Sigmoid colon (tissue), 7 donors: ENCODE measurements at regions of chr17 and their contacts with region 1.

Region 1: GRCh38 chr17:21284319-21285163 is at the start of gene MAP2K3:
- DNase-seq: peak; percentile 100
- H3K4me3 ChIP-seq: peak within 1 kb of the TSS; percentile 77 to 97 (median 86)
- H3K27ac ChIP-seq: peak within 1 kb of the TSS; percentile 91 to 99 (median 98)
- H3K4me1 ChIP-seq: peaks cover 0 to 71% (median 67%) of the 10 kb centered on the region in 4 donors
- H3K27me3 ChIP-seq: no peaks in the 10 kb centered on the region
- CTCF ChIP-seq: no peak
- EP300 ChIP-seq: no peak
- POLR2A ChIP-seq: peak; percentile 31 to 33
- total RNA-seq, gene MAP2K3: 9.5 to 23.3 (median 13.3) TPM

Region 2: DNA sequence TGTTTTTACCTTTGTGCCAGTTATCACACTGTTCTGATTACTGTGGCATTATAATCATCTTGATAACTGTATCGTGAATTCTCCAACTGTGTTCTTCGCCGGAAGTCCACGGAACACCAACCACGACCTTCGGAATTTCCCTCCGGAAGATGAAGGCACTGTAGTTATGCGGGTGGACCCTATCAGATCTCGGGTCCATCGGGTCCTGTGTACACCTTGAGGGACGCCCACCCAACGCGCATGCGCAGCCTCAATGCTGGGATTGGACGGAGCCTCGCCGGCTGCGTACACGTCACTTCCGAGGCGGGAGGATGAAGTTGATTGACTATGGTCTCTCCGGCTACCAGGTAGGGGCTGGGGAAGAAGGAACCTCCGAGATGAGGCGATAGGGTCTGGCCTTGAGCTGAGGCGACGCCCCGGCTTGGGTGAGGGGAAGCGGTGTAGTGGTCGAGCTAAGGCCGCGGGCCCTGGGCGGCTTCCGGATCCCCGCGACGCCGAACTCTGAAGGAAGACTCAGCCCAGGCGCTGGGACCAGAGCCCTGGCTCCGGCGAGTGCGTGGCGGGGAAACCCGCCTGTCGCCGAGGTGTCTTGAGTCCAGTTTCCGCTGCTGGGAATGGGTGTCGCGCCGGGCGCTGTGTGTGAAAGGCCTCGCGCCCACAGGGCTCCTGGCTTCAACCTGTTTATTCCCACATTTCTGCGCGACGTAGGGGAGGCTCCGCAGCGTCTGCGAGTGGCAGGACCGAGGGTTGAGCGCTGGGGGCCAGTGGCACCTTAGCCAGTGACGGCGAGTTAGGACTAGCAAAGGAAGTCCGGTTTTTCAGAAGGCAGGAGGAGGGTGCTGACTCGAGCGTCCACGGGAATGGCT is 157.7 kb before region 1 on chr17 and contains the start of gene DHRS7B:
- intact Hi-C with region 1: loop called (anchors 5 kb)
- DNase-seq: peak; percentile 98
- H3K4me3 ChIP-seq: peak within 1 kb of the TSS; percentile 66 to 85 (median 76)
- H3K27ac ChIP-seq: peak within 1 kb of the TSS; percentile 91 to 95 (median 94)
- H3K4me1 ChIP-seq: peaks cover 0 to 27% (median 17%) of the 10 kb centered on the region in 4 donors
- H3K27me3 ChIP-seq: no peaks in the 10 kb centered on the region
- CTCF ChIP-seq: no peak
- EP300 ChIP-seq: no peak
- POLR2A ChIP-seq: peak; percentile 31 to 53
- total RNA-seq, gene DHRS7B: 19.7 to 31.9 (median 27.0) TPM

Region 3: GRCh38 chr17:21214015-21214776 is 70.3 kb before region 1 on chr17 and contains the start of gene TMEM11:
- intact Hi-C with region 1: loop called (anchors 2 kb)
- DNase-seq: peak; percentile 98
- H3K4me3 ChIP-seq: peak within 1 kb of the TSS; percentile 85 to 95 (median 91)
- H3K27ac ChIP-seq: peak within 1 kb of the TSS; percentile 89 to 93 (median 92)
- H3K4me1 ChIP-seq: peaks cover 0 to 61% (median 54%) of the 10 kb centered on the region in 4 donors
- H3K27me3 ChIP-seq: no peaks in the 10 kb centered on the region
- CTCF ChIP-seq: no peak
- EP300 ChIP-seq: no peak
- POLR2A ChIP-seq: peak; percentile 51 to 78
- total RNA-seq, gene TMEM11: 14.5 to 32.8 (median 22.4) TPM

Region 4: DNA sequence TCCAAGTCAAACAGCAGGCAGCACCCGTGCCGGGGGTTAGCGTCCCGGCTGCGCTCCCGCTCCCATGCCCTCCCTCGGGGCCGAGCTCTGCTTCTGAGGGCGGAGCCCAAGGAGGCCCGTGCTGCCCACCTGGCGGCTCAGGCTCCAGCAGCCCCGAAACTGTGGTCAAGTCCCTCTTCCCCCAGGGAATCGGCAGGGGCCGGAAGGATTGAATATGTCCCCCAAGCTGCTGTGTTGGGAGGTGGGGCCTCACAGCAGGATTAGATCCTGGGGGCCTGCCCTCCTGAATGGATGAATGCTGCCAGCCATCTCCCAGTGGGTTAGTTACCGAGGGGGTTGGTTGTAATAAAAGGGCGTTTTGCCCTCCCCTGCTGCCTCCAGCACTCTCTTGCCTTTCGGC is 33.9 kb after region 1 on chr17:
- intact Hi-C with region 1: loop called (anchors 2 kb)
- DNase-seq: peak; percentile 65
- H3K4me3 ChIP-seq: no peak overlapping the region
- H3K27ac ChIP-seq: no peak overlapping the region
- H3K4me1 ChIP-seq: peaks cover 0 to 9% (median 8%) of the 10 kb centered on the region in 4 donors
- H3K27me3 ChIP-seq: no peaks in the 10 kb centered on the region
- CTCF ChIP-seq: no peak
- EP300 ChIP-seq: no peak
- POLR2A ChIP-seq: no peak

Region 5: GRCh38 chr17:21358707-21359482 is 74.4 kb after region 1 on chr17:
- intact Hi-C with region 1: no loop called
- DNase-seq: no peak
- H3K4me3 ChIP-seq: no peak overlapping the region
- H3K27ac ChIP-seq: no peak overlapping the region
- H3K4me1 ChIP-seq: no peaks in the 10 kb centered on the region
- H3K27me3 ChIP-seq: no peaks in the 10 kb centered on the region
- CTCF ChIP-seq: no peak
- EP300 ChIP-seq: no peak
- POLR2A ChIP-seq: no peak

Region 6: DNA sequence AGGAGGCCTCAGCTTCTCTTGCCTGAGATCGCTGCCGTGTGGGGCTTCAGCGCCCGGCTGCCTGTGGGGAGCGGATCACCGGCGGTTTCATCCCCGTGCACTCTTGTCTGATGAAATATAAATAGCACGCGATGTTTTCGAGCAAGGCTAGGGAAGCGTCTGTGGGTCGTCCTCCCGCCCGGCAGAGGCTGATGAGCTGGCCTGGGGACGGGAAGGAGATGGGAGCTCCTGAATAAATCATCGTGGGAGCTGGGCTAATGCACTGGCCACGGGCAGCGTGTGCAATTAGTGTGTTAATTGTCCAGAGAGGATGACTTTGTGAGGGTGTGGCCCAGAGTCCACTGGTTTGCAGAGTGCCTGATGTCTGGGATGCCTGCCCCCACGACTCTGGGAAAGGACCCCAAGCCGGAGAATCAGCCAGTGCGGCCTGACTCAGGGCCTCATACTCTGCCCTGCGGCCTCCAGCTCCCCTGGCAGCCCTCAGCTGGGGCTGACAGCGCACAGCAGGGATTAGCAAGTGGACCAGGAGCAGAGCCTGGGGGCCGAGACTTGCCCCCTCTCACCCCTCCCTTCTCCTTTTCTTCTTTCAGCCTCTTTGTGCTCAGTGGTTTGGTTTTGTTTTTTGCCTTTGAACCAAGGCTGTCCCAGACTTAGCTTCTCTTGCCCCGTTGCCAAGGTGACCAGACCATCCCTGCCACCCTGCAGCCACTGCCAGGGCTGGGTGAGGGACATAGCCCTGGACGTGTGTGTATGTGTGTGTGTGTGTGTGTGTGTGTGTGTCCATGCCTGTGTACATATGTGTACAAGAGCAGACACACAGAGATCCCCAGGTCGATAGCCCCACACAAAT is 113.0 kb after region 1 on chr17:
- intact Hi-C with region 1: loop called (anchors 5 kb)
- DNase-seq: peak; percentile 78
- H3K4me3 ChIP-seq: peak overlapping the region in 1 of 4 donors; percentile 4
- H3K27ac ChIP-seq: peak overlapping the region; percentile 27 to 70 (median 52)
- H3K4me1 ChIP-seq: peaks cover 0 to 33% (median 19%) of the 10 kb centered on the region in 4 donors
- H3K27me3 ChIP-seq: no peaks in the 10 kb centered on the region
- CTCF ChIP-seq: no peak
- EP300 ChIP-seq: no peak
- POLR2A ChIP-seq: no peak

Region 7: GRCh38 chr17:21457051-21458026 is 172.8 kb after region 1 on chr17:
- intact Hi-C with region 1: loop called (anchors 5 kb)
- DNase-seq: peak; percentile 91
- H3K4me3 ChIP-seq: no peak overlapping the region
- H3K27ac ChIP-seq: peak overlapping the region in 1 of 4 donors; percentile 20
- H3K4me1 ChIP-seq: peaks cover 0 to 13% (median 10%) of the 10 kb centered on the region in 4 donors
- H3K27me3 ChIP-seq: peaks cover 0 to 5% (median 0%) of the 10 kb centered on the region in 3 donors
- CTCF ChIP-seq: peak; percentile 65 to 95 (median 72)
- EP300 ChIP-seq: no peak
- POLR2A ChIP-seq: no peak